ENCODE measurements at regions of chr6 and their contacts with region 1.

Region 1: GRCh38 chr6:166097915-166098522 is 69.6 kb downstream of the TBXT start:
- DNase-seq: peak; percentile 75
- H3K4me3 ChIP-seq: peak overlapping the region; percentile 41
- H3K27ac ChIP-seq: no peak overlapping the region
- H3K4me1 ChIP-seq: no peaks in the 10 kb centered on the region
- H3K27me3 ChIP-seq: no peaks in the 10 kb centered on the region
- CTCF ChIP-seq: peak; percentile 98

Region 2: DNA sequence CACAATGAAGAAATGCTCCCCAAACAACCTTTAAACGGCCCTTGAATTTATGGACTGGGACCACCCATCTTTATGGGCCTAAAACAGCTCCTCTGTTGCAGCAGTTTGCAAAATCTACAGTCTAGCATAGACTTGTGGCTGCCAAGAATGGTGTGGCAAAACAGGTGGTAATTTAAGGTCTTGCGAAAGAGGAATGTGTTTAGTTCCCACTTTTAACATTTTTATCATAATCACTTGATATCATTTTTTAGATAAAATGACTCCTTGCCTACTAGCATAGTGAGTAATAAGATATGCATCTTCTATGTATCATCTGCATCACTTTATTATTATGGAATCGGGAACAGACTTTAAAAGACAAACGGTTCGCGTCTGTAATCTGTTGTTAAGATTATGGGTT is 629.2 kb before region 1 on chr6:
- CTCF ChIA-PET with region 1: no interaction called
- POLR2A ChIA-PET with region 1: no interaction called
- intact Hi-C with region 1: no loop called
- DNase-seq: no peak
- H3K4me3 ChIP-seq: no peak overlapping the region
- H3K27ac ChIP-seq: no peak overlapping the region
- H3K4me1 ChIP-seq: no peaks in the 10 kb centered on the region
- H3K27me3 ChIP-seq: peaks cover 26% of the 10 kb centered on the region
- CTCF ChIP-seq: no peak

Region 3: DNA sequence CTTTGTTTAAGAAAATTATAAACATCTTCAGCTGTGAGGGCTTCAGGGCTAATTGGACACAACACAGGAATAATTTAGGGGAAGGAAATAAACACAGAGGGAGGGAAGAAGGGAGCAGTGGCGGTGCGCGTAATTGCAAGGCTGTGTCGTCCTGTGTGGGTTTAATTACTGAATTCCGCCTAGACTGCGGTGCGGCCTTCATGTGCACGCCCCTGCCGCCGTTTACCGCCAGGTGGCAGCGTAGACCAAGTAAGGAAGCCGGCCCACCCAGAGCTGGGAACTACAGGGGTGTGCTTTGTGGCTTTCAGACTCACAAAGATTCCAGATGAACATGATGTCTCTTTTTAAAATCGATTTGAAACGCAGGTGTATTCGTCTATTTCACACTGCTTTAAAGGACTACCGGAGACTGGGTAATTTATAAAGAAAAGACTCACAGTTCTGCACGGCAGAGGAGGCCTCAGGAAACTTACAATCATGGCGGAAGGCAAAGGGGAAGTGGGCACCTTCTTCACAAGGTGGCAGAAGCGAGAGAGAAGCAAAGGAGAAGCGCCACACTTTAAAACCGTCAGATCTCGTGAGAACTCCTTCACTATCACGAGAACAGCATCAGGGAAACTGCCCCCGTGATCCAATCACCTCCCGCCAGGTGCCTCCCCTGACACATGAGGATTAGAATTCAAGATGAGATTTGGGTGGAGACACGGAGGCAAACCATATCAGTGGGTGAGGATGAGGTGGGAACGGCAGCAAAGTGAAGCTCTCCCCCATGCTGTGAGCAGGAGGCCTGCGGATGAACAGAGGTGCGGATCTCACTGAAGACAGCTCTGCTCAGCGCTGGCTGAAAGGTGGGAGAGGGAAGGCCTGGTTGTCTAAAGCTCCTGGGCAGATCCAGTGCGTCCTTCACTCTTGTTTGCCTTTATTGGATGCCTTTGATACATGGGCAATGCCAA is 212.9 kb before region 1 on chr6:
- CTCF ChIA-PET with region 1: interaction called, 6 read pairs
- POLR2A ChIA-PET with region 1: no interaction called
- intact Hi-C with region 1: loop called (anchors 1 kb)
- DNase-seq: peak; percentile 87
- H3K4me3 ChIP-seq: no peak overlapping the region
- H3K27ac ChIP-seq: no peak overlapping the region
- H3K4me1 ChIP-seq: no peaks in the 10 kb centered on the region
- H3K27me3 ChIP-seq: peaks cover 1% of the 10 kb centered on the region
- CTCF ChIP-seq: peak; percentile 95

Region 4: GRCh38 chr6:165910184-165910966 is 187.6 kb before region 1 on chr6:
- CTCF ChIA-PET with region 1: no interaction called
- POLR2A ChIA-PET with region 1: no interaction called
- intact Hi-C with region 1: no loop called
- DNase-seq: no peak
- H3K4me3 ChIP-seq: no peak overlapping the region
- H3K27ac ChIP-seq: no peak overlapping the region
- H3K4me1 ChIP-seq: no peaks in the 10 kb centered on the region
- H3K27me3 ChIP-seq: peaks cover 22% of the 10 kb centered on the region
- CTCF ChIP-seq: no peak

Region 5: DNA sequence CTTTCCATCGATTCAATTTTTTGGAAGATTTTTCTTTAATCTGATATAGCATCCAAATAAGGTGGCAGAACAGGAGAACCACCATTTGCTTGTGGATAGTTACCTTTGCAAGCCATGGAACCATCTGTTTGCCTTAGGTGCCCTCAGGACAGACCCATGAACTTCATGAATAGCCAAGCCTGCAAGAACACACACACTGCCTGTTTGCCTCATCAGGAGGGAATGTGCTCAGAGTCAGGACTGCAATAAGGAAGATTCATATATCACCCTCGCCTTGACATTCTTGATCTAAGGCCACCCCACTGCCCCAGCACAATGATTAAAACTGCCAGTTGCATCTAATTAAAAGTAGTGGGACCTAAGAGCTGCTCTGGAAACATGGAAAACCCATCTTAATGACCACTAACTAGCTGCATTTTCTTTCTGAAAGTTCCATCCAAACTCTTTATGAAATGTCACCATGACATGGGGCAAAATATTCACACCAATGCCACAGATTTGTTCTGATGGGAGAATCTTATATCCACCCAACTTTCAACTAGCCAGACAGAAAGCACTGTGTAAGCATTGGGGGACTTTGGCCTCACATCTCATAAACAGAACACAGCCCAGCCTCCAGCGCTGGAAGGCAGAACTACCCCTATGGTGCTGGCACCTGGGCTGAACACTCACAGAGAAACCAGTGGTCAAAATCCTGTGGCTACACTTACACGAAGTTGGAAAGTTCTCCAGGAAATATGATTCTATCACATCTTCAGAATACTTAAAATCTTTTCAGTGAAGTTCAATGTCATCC is 21.3 kb after region 1 on chr6:
- CTCF ChIA-PET with region 1: interaction called, 10 read pairs
- POLR2A ChIA-PET with region 1: no interaction called
- intact Hi-C with region 1: no loop called
- DNase-seq: no peak
- H3K4me3 ChIP-seq: no peak overlapping the region
- H3K27ac ChIP-seq: no peak overlapping the region
- H3K4me1 ChIP-seq: no peaks in the 10 kb centered on the region
- H3K27me3 ChIP-seq: peaks cover 7% of the 10 kb centered on the region
- CTCF ChIP-seq: no peak

Region 6: GRCh38 chr6:166586424-166587156 is 488.6 kb after region 1 on chr6 and contains the start of gene RAMACL:
- CTCF ChIA-PET with region 1: no interaction called
- POLR2A ChIA-PET with region 1: no interaction called
- intact Hi-C with region 1: no loop called
- DNase-seq: peak; percentile 24
- H3K4me3 ChIP-seq: no peak within 1 kb of the TSS
- H3K27ac ChIP-seq: no peak within 1 kb of the TSS
- H3K4me1 ChIP-seq: peaks cover 53% of the 10 kb centered on the region
- H3K27me3 ChIP-seq: no peaks in the 10 kb centered on the region
- CTCF ChIP-seq: no peak
- total RNA-seq, gene RAMACL: 0.77 and 2.2 TPM in 2 replicates